PC-3 (cell line): ENCODE measurements at regions of chr9 and their contacts with region 1.

Region 1: DNA sequence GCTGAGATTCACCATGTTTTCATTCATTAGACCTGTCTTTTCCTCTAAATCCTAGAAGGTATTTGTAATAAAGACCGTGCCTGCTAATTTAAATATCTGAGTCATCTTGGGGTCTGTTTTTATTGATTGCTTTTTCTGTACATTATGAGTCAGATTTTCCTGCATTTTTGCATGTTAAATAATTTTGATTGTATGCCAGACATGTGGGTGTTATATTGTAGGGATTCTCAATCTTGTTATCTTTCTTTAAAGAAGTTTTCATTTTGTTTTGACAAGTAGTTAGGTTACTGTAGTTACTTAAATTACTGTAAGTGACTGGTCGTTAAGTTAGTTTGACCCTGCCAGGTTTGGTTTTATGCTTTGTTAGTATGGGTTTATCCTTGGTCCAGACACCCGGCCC is 35.1 kb downstream of the EXOSC2 start:
- DNase-seq: peak; percentile 80
- ATAC-seq: peak; percentile 41
- H3K4me3 ChIP-seq: peak overlapping the region; percentile 34; the same call in 1 of the 2 replicates
- H3K27ac ChIP-seq: peak overlapping the region; percentile 81
- H3K4me1 ChIP-seq: peaks cover 39% of the 10 kb centered on the region
- H3K27me3 ChIP-seq: no peaks in the 10 kb centered on the region
- CTCF ChIP-seq: no peak

Region 2: GRCh38 chr9:130663258-130663976 is 65.3 kb before region 1 on chr9:
- CTCF ChIA-PET with region 1: no interaction called
- POLR2A ChIA-PET with region 1: no interaction called
- intact Hi-C with region 1: no loop called
- DNase-seq: no peak
- ATAC-seq: peak; percentile 64
- H3K4me3 ChIP-seq: no peak overlapping the region
- H3K27ac ChIP-seq: no peak overlapping the region
- H3K4me1 ChIP-seq: no peaks in the 10 kb centered on the region
- H3K27me3 ChIP-seq: peaks cover 40% of the 10 kb centered on the region
- CTCF ChIP-seq: no peak

Region 3: GRCh38 chr9:130715270-130716077 is 13.2 kb before region 1 on chr9:
- CTCF ChIA-PET with region 1: interaction called, 4 read pairs
- POLR2A ChIA-PET with region 1: interaction called, 3 read pairs
- intact Hi-C with region 1: loop called (anchors 2 kb)
- DNase-seq: peak; percentile 70
- ATAC-seq: peak; percentile 13; the same call in 1 of the 2 replicates
- H3K4me3 ChIP-seq: peak overlapping the region; percentile 74
- H3K27ac ChIP-seq: no peak overlapping the region
- H3K4me1 ChIP-seq: peaks cover 6% of the 10 kb centered on the region; the same call in 1 of the 2 replicates
- H3K27me3 ChIP-seq: no peaks in the 10 kb centered on the region
- CTCF ChIP-seq: no peak

Region 4: GRCh38 chr9:130940693-130941576 is 212.2 kb after region 1 on chr9:
- CTCF ChIA-PET with region 1: no interaction called
- POLR2A ChIA-PET with region 1: no interaction called
- intact Hi-C with region 1: loop called (anchors 10 kb)
- DNase-seq: peak; percentile 85
- ATAC-seq: peak; percentile 69
- H3K4me3 ChIP-seq: peak overlapping the region; percentile 44; the same call in 1 of the 2 replicates
- H3K27ac ChIP-seq: no peak overlapping the region
- H3K4me1 ChIP-seq: peaks cover 11% of the 10 kb centered on the region
- H3K27me3 ChIP-seq: peaks cover 8% of the 10 kb centered on the region; the same call in 1 of the 2 replicates
- CTCF ChIP-seq: peak; percentile 75